Aorta (tissue), 5 donors: ENCODE measurements at regions of chr2 and their contacts with region 1.

Region 1: DNA sequence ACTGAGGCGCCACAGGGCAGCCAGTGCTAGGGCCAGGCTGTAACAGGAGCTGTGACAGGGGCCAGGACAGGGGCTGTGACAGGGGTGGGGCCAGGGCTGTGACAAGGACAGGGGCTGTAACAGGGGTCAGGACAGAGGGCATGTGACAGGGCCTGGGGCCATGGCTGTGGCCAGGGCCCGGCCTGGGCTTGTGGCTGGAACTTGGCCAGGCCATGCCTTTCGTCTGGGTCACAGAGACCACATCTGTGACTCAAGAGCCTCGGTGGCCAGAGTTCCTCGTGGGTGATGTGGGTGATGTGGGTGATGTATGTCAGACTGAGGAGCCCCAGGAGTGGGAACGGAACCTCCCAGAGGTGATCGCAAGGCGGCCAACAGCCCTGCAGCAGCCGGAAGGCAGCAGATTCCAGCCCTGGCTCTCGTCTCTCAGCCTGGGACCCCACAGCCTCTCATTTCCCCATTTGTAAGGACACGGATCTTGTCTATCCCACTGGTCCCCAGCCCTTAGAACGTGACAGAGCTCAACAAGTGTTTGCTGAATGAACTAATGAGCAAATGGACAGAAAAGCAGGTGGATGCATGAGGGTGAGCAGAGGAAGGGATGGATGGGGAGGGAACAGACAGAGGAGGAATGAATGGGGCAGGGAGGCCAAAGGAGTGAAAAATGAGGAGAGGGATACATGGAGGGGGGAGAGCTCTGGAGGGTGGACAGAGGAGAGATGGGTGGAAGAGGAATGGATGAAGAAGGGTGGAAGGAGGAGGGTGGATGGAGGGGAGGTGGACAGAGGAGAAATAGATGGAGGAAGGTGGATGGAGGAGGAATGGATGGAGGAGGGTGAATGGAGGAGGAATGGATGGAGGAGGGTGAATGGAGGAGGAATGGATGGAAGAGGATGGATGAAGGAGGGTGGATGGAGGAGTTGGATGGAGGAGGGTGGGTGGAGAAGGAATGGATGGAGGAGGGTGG is 17.3 kb downstream of the ESPNL start:
- DNase-seq: peak; percentile 32 to 50
- ATAC-seq: no peak
- H3K4me3 ChIP-seq: no peak overlapping the region
- H3K27ac ChIP-seq: no peak overlapping the region
- H3K4me1 ChIP-seq: no peaks in the 10 kb centered on the region
- H3K27me3 ChIP-seq: no peaks in the 10 kb centered on the region

Region 2: DNA sequence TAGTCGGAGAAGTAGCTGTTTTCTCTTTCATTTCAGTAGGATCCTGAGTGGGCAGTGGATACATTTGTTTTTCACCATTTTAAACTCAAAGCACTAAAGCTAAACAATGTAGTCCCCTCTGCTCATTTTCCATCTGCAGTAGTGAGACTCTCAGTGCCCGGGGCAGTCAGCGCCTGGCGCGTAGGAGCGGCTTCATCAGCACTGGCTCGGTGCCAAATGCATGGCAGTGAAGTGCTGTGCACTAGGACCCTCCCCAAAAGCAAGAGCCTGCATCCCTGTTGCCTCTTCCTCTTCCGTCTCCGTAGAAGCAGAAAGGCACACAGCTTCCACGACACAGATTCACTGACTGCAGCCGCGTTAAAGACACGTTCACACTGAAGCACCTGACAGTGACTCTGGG is 36.3 kb before region 1 on chr2:
- intact Hi-C with region 1: loop called in 1 of 2 experiments (anchors 2 kb)
- DNase-seq: no peak
- ATAC-seq: no peak
- H3K4me3 ChIP-seq: no peak overlapping the region
- H3K27ac ChIP-seq: no peak overlapping the region
- H3K4me1 ChIP-seq: no peaks in the 10 kb centered on the region
- H3K27me3 ChIP-seq: no peaks in the 10 kb centered on the region

Region 3: DNA sequence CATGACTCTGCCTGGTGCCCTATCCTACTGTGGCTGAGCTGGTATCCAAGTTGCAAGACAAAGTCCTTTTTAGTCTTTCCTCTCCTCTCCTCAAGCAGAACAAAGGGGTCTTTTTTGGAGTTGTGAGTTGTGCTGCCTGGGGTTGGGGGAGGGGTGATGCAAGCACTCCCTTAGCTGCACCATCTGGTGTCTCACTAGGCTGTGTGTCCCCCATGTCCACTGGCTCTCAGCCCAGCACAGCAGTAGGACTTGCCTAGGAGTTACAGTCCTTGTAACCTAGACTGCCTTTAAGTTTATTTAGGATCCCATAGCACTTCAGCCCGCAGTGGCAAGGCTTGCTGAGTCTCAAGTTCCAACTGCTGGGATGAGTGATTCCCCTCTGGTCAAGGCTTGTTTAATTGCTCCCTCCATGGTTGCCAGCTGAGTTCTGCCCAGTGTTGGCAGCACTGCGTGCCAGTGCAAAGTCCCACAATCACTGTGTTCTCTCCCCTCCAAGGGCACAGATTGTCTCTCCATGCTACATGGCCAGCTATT is 99.2 kb after region 1 on chr2:
- intact Hi-C with region 1: no loop called
- DNase-seq: no peak
- ATAC-seq: no peak
- H3K4me3 ChIP-seq: no peak overlapping the region
- H3K27ac ChIP-seq: no peak overlapping the region
- H3K4me1 ChIP-seq: no peaks in the 10 kb centered on the region
- H3K27me3 ChIP-seq: no peaks in the 10 kb centered on the region